ENCODE measurements at regions of chr2 and their contacts with region 1.

Region 1: GRCh38 chr2:219388127-219388844 is 574 bp upstream of the DNPEP start:
- DNase-seq: peak; percentile 97 to 100 (median 98)
- ATAC-seq: peak; percentile 87
- H3K4me3 ChIP-seq: peak overlapping the region; percentile 38
- H3K4me3 Mint-ChIP-seq: peak overlapping the region; percentile 64 to 97 (median 90)
- H3K27ac ChIP-seq: peak overlapping the region; percentile 78
- H3K27ac Mint-ChIP-seq: peak overlapping the region; percentile 73 to 98 (median 91)
- H3K4me1 ChIP-seq: peaks cover 17 to 22% of the 10 kb centered on the region in 2 donors
- H3K4me1 Mint-ChIP-seq: peaks cover 2 to 37% (median 32%) of the 10 kb centered on the region in 7 donors
- H3K27me3 ChIP-seq: no peaks in the 10 kb centered on the region
- H3K27me3 Mint-ChIP-seq: peaks cover 0 to 11% (median 0%) of the 10 kb centered on the region in 5 donors

Region 2: GRCh38 chr2:218406209-218406948 is 981.9 kb before region 1 on chr2:
- CTCF ChIA-PET with region 1: no interaction called
- POLR2A ChIA-PET with region 1: no interaction called
- intact Hi-C with region 1: loop called in 1 of 2 experiments (anchors 1 kb)
- DNase-seq: peak; percentile 75 to 94 (median 85)
- ATAC-seq: peak; percentile 81
- H3K4me3 ChIP-seq: peak overlapping the region; percentile 56
- H3K4me3 Mint-ChIP-seq: peak overlapping the region; percentile 77 to 95 (median 88)
- H3K27ac ChIP-seq: peak overlapping the region; percentile 75
- H3K27ac Mint-ChIP-seq: peak overlapping the region; percentile 83 to 95 (median 91)
- H3K4me1 ChIP-seq: peaks cover 23 to 32% of the 10 kb centered on the region in 2 donors
- H3K4me1 Mint-ChIP-seq: peaks cover 31 to 62% (median 53%) of the 10 kb centered on the region in 7 donors
- H3K27me3 ChIP-seq: no peaks in the 10 kb centered on the region
- H3K27me3 Mint-ChIP-seq: peaks cover 0 to 3% (median 0%) of the 10 kb centered on the region in 5 donors

Region 3: DNA sequence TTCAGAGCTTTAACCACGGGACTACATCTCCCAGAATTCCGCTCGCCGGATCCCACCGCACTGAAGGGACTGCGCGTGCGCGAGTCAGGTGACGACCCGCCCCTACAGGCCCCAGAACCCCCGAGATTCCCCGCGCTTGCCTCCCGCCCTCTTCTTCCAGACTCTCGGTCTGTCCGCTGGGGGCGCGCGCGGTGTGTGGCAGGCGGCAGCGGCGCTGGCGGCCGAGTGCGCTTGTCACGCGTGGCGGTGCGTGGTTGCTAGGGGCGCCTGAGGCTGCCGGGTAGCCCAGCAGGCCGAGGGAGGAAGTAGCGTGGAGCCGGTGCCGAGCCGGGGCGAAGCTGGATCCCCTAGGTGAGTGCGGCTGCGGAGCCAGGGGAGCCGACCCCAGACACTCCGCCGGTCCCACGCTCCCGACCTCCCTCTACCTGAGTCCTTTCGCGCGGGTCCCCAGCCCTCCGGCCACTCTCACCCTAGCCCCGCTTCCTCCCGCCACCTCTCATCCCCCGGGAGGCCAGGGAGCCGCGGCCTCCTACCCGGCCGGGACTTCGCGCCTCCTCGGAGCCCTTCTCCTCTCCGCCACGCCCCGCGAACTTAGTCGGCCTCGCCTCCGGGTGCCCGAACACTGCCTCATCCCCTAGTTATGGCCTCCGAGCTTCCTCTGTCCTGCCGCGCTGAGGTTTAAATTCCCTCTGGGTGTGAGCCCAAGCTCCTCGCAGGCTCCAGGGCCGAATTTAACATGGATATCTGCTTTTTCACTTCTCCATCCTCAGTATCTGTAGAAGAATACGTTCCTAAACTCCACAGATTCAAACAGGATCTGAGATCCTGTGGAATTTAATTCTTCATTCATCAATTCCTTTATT is 677.4 kb before region 1 on chr2 and contains the start of gene TTLL4:
- CTCF ChIA-PET with region 1: no interaction called
- POLR2A ChIA-PET with region 1: no interaction called
- intact Hi-C with region 1: loop called (anchors 1 kb)
- DNase-seq: peak; percentile 98 to 99 (median 99)
- ATAC-seq: peak; percentile 99
- H3K4me3 ChIP-seq: peak within 1 kb of the TSS; percentile 79
- H3K4me3 Mint-ChIP-seq: peak within 1 kb of the TSS; percentile 91 to 99 (median 97)
- H3K27ac ChIP-seq: peak within 1 kb of the TSS; percentile 86
- H3K27ac Mint-ChIP-seq: peak within 1 kb of the TSS; percentile 58 to 96 (median 90)
- H3K4me1 ChIP-seq: peaks cover 8% of the 10 kb centered on the region in 2 donors
- H3K4me1 Mint-ChIP-seq: peaks cover 17 to 31% (median 19%) of the 10 kb centered on the region in 7 donors
- H3K27me3 ChIP-seq: no peaks in the 10 kb centered on the region
- H3K27me3 Mint-ChIP-seq: peaks cover 0 to 7% (median 0%) of the 10 kb centered on the region in 5 donors
- total RNA-seq, gene TTLL4: 18.7 to 35.8 (median 21.2) TPM

Region 4: DNA sequence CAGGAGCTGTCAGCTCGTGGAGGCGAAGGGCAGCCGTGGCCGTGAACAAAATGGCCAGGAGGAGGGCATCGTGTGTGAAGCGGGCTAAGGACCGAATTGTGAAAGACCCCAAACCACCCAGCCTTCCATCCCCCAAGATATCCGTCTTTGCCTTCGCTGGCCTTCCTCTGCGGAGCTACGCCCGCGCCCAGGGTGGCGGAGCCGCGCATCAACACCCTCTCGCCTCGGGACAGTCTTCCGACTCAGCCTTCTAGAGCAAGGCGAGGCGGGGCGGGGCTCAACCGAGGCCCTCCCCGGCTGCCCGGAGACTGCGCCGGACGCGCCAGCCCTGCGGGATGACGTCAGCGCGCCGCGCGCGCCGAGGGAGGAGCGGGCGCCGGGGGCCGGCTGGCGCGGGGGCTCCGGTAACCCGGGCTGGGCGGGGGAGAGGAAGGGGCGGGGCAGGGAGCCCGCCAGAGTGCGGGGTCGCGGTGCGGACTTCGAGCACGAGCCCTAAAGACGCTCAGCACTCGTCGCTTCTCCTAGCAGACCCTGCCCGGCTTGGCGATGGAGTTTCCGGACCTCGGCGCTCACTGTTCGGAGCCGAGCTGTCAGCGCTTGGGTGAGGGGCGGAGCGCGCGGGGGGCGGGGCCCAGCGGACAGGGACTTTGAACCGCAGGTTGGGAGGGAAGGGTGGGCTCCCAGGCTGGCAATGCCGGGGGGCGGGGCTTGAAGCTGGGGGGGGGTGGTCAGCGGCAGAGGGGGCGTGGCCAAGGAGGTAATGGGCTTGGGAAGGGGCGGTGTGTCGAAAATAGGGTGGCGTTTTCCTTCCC is 181.6 kb before region 1 on chr2 and contains the start of gene ZFAND2B:
- CTCF ChIA-PET with region 1: no interaction called
- POLR2A ChIA-PET with region 1: interaction called, 4 read pairs
- intact Hi-C with region 1: loop called in 1 of 2 experiments (anchors 1 kb)
- DNase-seq: peak; percentile 92 to 98 (median 96)
- ATAC-seq: peak; percentile 96
- H3K4me3 ChIP-seq: peak within 1 kb of the TSS; percentile 98
- H3K4me3 Mint-ChIP-seq: peak within 1 kb of the TSS; percentile 77 to 98 (median 94)
- H3K27ac ChIP-seq: peak within 1 kb of the TSS; percentile 92
- H3K27ac Mint-ChIP-seq: peak within 1 kb of the TSS; percentile 96 to 99 (median 97)
- H3K4me1 ChIP-seq: peaks cover 20 to 28% of the 10 kb centered on the region in 2 donors
- H3K4me1 Mint-ChIP-seq: peaks cover 15 to 48% (median 43%) of the 10 kb centered on the region in 7 donors
- H3K27me3 ChIP-seq: no peaks in the 10 kb centered on the region
- H3K27me3 Mint-ChIP-seq: no peaks in the 10 kb centered on the region
- total RNA-seq, gene ZFAND2B: 50.1 to 79.5 (median 71.3) TPM

Region 5: GRCh38 chr2:219294356-219295351 is 93.6 kb before region 1 on chr2:
- CTCF ChIA-PET with region 1: interaction called, 4 read pairs
- POLR2A ChIA-PET with region 1: interaction called, 4 read pairs
- intact Hi-C with region 1: loop called (anchors 1 kb)
- DNase-seq: peak; percentile 80 to 93 (median 90)
- ATAC-seq: peak; percentile 99
- H3K4me3 ChIP-seq: peak overlapping the region; percentile 47
- H3K4me3 Mint-ChIP-seq: peak overlapping the region; percentile 68 to 89 (median 82)
- H3K27ac ChIP-seq: peak overlapping the region; percentile 79
- H3K27ac Mint-ChIP-seq: peak overlapping the region; percentile 56 to 88 (median 84)
- H3K4me1 ChIP-seq: peaks cover 2 to 20% of the 10 kb centered on the region in 2 donors
- H3K4me1 Mint-ChIP-seq: peaks cover 11 to 34% (median 27%) of the 10 kb centered on the region in 7 donors
- H3K27me3 ChIP-seq: no peaks in the 10 kb centered on the region
- H3K27me3 Mint-ChIP-seq: peaks cover 0 to 9% (median 0%) of the 10 kb centered on the region in 5 donors

Region 6: GRCh38 chr2:219358170-219359075 is 29.9 kb before region 1 on chr2:
- CTCF ChIA-PET with region 1: no interaction called
- POLR2A ChIA-PET with region 1: no interaction called
- intact Hi-C with region 1: no loop called
- DNase-seq: no peak
- ATAC-seq: peak; percentile 10
- H3K4me3 ChIP-seq: no peak overlapping the region
- H3K4me3 Mint-ChIP-seq: peak overlapping the region in 4 of 10 donors; percentile 26 to 74 (median 52)
- H3K27ac ChIP-seq: no peak overlapping the region
- H3K27ac Mint-ChIP-seq: no peak overlapping the region
- H3K4me1 ChIP-seq: no peaks in the 10 kb centered on the region
- H3K4me1 Mint-ChIP-seq: peaks cover 0 to 4% (median 3%) of the 10 kb centered on the region in 7 donors
- H3K27me3 ChIP-seq: peaks cover 0 to 3% of the 10 kb centered on the region in 2 donors
- H3K27me3 Mint-ChIP-seq: peaks cover 44 to 60% (median 53%) of the 10 kb centered on the region in 5 donors

Region 7: GRCh38 chr2:219543601-219544358 is 155.5 kb after region 1 on chr2 and contains the starts of genes CHPF and TMEM198:
- CTCF ChIA-PET with region 1: interaction called, 4 read pairs
- POLR2A ChIA-PET with region 1: interaction called, 5 read pairs
- intact Hi-C with region 1: loop called (anchors 1 kb)
- DNase-seq: peak; percentile 79 to 94 (median 88)
- ATAC-seq: peak; percentile 86
- H3K4me3 ChIP-seq: peak within 1 kb of the TSS; percentile 51
- H3K4me3 Mint-ChIP-seq: peak within 1 kb of the TSS; percentile 83 to 95 (median 90)
- H3K27ac ChIP-seq: peak within 1 kb of the TSS; percentile 78
- H3K27ac Mint-ChIP-seq: peak within 1 kb of the TSS; percentile 71 to 90 (median 78)
- H3K4me1 ChIP-seq: peaks cover 10 to 12% of the 10 kb centered on the region in 2 donors
- H3K4me1 Mint-ChIP-seq: peaks cover 18 to 30% (median 25%) of the 10 kb centered on the region in 7 donors
- H3K27me3 ChIP-seq: no peaks in the 10 kb centered on the region
- H3K27me3 Mint-ChIP-seq: peaks cover 0 to 18% (median 11%) of the 10 kb centered on the region in 5 donors
- total RNA-seq, gene CHPF: 4.3 to 15.3 (median 5.7) TPM
- total RNA-seq, gene TMEM198: 0.45 to 0.69 (median 0.50) TPM in 4 of 5 experiments, not detected in the other

Region 8: DNA sequence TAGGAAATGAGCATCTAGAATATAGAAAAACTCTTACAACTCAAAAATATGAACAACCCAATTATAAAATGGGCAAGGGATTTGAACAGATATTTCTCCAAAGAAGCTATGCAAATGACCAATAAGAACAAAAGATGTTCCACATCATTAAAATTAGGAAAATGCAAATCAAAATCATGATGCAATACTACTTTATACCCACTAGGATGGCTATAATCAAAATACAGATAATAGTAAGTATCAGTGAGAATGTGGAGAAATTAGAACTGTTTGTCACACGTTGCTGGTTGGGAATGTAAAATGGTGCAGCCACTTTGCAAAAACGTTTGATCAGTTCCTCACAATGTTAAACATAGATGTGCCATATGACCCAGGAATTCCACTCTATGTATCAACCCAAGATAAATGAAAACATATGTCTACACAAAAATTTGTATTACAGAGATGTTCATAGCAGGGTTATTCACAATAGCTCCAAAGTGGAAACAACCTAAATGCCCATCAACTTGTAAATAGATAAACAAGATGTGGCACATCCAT is 797.5 kb after region 1 on chr2:
- CTCF ChIA-PET with region 1: no interaction called
- POLR2A ChIA-PET with region 1: no interaction called
- intact Hi-C with region 1: no loop called
- DNase-seq: no peak
- ATAC-seq: no peak
- H3K4me3 ChIP-seq: no peak overlapping the region
- H3K4me3 Mint-ChIP-seq: no peak overlapping the region
- H3K27ac ChIP-seq: no peak overlapping the region
- H3K27ac Mint-ChIP-seq: no peak overlapping the region
- H3K4me1 ChIP-seq: no peaks in the 10 kb centered on the region
- H3K4me1 Mint-ChIP-seq: no peaks in the 10 kb centered on the region
- H3K27me3 ChIP-seq: no peaks in the 10 kb centered on the region
- H3K27me3 Mint-ChIP-seq: peaks cover 0 to 4% (median 0%) of the 10 kb centered on the region in 5 donors